Activated CD4-positive, alpha-beta memory T cell treated with anti-CD3 and anti-CD28 coated beads, Interleukin-2, amount 10 ng/mL, durations not matched to agents 7 days and 5 days (primary cell): ENCODE measurements at regions of chr13 and their contacts with region 1.

Region 1: DNA sequence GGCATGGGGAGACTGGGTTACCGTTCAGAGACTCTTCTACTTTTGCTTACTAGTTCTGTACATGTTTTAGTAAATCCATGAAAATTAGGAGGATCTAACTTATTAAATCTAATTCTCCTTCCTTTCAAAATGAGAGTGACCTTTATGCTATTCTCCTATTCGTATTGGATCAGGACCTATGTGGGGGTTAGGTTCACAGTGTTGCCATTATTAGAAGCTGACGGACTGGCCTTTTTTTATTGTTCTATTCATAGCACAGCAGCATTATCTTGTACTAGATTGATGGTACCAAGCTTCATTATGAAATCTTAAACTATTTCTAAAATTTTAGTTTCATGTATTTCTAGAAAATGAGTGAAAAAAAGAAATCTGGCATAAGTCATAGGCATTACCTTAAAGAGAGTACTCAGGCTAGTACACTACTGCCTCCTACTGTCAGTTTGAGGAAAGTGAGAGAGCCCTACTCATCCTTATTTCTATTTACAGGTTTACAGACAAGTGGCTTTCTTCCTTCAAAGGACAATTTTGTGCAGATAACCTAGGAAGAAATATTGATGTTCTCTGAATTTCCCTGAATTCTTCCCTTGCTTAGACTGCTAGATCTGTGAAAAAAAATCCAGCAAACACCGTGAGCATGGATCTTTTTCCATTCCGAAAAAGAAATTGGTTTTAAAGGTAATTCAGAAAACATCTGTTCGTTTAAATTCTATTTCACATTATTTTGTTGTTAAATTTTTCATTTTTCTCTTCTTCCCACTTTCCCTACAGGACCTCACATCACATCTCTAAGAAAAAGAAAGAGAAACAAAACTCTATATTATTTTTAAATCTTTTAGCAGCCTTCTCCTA is 485.5 kb downstream of the DIAPH3 start:
- DNase-seq: no peak
- H3K4me3 Mint-ChIP-seq: no peak overlapping the region
- H3K27ac Mint-ChIP-seq: no peak overlapping the region
- H3K4me1 Mint-ChIP-seq: peaks cover 3% of the 10 kb centered on the region
- H3K27me3 Mint-ChIP-seq: no peaks in the 10 kb centered on the region

Region 2: DNA sequence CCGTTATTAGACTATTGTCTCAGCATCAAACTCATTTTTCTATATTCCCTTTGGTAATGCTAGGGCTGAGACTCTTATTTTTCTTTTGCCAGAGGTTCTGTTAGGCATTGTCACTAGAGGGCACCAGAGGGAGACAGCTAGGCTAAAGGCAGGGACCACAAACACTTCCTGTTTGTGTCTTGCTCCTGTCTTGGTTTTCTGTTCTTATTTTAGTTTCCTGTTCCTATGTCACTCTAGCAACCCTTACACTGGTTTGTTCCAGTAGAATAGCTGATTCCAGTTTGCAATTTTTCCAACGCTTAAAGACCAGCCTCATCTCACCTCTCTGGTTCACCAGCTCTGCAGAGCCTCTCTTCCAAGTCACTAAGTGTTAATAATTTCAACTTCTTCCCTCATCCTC is 286.5 kb before region 1 on chr13:
- CTCF ChIA-PET with region 1: interaction called, 23 read pairs
- POLR2A ChIA-PET with region 1: no interaction called
- DNase-seq: peak; percentile 62
- H3K4me3 Mint-ChIP-seq: no peak overlapping the region
- H3K27ac Mint-ChIP-seq: no peak overlapping the region
- H3K4me1 Mint-ChIP-seq: no peaks in the 10 kb centered on the region
- H3K27me3 Mint-ChIP-seq: peaks cover 18% of the 10 kb centered on the region

Region 3: DNA sequence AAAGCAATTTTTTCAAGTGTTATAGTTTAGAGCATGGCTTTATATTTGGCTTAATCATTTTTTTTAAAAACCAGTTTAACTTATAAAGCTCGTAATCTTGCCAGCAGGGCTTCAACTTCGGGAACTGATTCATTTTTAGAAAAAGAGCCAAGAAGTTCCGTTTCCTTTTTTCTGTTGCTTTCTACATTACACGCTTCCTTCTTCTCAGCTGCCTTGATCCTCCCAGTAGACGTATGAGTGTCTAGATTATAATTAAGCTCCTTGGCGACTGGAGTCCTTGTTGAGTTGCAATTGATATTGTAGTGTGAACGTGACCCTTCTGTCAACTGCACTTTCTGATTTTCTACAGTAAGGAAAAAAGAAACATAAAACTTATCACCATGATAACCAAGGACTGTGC is 11.7 kb before region 1 on chr13:
- CTCF ChIA-PET with region 1: interaction called, 11 read pairs
- POLR2A ChIA-PET with region 1: no interaction called
- DNase-seq: no peak
- H3K4me3 Mint-ChIP-seq: no peak overlapping the region
- H3K27ac Mint-ChIP-seq: no peak overlapping the region
- H3K4me1 Mint-ChIP-seq: no peaks in the 10 kb centered on the region
- H3K27me3 Mint-ChIP-seq: no peaks in the 10 kb centered on the region

Region 4: GRCh38 chr13:59700281-59700680 is 22.1 kb after region 1 on chr13:
- CTCF ChIA-PET with region 1: no interaction called
- POLR2A ChIA-PET with region 1: no interaction called
- DNase-seq: no peak
- H3K4me3 Mint-ChIP-seq: no peak overlapping the region
- H3K27ac Mint-ChIP-seq: no peak overlapping the region
- H3K4me1 Mint-ChIP-seq: peaks cover 5% of the 10 kb centered on the region
- H3K27me3 Mint-ChIP-seq: no peaks in the 10 kb centered on the region

Region 5: DNA sequence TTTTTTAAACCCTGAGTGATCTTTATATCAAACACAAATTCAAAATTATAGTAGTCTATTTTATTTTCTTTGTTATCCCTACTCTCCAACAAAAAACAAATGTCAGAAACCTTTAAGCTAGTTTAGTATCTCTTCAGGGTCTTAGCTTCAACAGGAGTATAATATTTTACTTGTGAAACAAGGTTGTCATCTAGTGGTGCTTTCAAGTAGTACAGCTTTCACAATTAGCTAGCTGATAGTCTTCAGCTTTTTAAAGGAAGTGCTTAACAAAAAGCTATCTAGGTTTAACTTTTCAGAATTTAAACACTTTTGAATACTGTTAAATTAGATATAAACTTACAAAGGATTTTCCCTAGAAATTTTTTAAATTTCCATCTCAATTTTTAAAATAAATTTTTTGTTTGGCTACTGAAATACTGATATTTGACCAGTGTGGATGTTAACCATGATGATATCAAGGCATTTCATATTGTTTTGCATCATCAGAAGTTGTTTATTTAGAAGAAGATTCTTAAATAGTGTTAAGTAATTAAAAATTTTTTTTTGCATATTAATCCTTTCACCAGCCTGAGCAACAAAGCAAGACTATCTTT is 753.0 kb after region 1 on chr13:
- CTCF ChIA-PET with region 1: interaction called, 15 read pairs
- POLR2A ChIA-PET with region 1: no interaction called
- DNase-seq: no peak
- H3K4me3 Mint-ChIP-seq: no peak overlapping the region
- H3K27ac Mint-ChIP-seq: no peak overlapping the region
- H3K4me1 Mint-ChIP-seq: peaks cover 32% of the 10 kb centered on the region
- H3K27me3 Mint-ChIP-seq: no peaks in the 10 kb centered on the region